AG04450 (cell line): ENCODE measurements at regions of chr10 and their contacts with region 1.

Region 1: GRCh38 chr10:26860443-26861204 is at the start of gene ABI1:
- DNase-seq: peak; percentile 97
- H3K4me3 ChIP-seq: peak within 1 kb of the TSS; percentile 90
- H3K27ac ChIP-seq: peak within 1 kb of the TSS; percentile 70
- H3K27me3 ChIP-seq: peaks cover 4% of the 10 kb centered on the region
- CTCF ChIP-seq: no peak
- polyA plus RNA-seq, gene ABI1: 51.1 and 64.2 TPM in 2 replicates

Region 2: DNA sequence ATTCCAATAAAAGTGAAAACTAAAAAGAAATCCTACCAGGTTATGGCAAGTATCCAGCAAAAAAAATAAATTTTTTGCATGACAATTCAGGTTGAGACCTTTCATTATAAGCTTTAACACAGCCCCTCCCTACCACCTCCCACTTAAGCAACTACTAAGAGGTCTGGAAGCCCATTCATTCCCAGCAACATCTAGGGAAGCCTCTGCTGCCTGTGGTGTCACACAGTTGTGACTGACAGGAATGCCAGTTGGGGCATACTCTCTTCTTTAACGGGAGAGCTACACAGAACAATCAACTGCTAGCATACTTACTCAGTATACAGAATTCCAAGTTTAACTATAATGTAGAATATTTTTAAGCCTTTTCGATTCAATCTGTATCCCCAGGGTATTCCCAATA is 27.7 kb before region 1 on chr10:
- CTCF ChIA-PET with region 1: interaction called, 10 read pairs
- POLR2A ChIA-PET with region 1: interaction called, 3 read pairs
- DNase-seq: no peak
- H3K4me3 ChIP-seq: no peak overlapping the region
- H3K27ac ChIP-seq: no peak overlapping the region
- H3K27me3 ChIP-seq: no peaks in the 10 kb centered on the region
- CTCF ChIP-seq: no peak